ENCODE measurements at regions of chr11 and their contacts with region 1.

Region 1: GRCh38 chr11:133064152-133064877 is 468.0 kb downstream of the OPCML start:
- DNase-seq: peak; percentile 48 to 89 (median 79)
- ATAC-seq: peak; percentile 93 to 96 (median 94)
- H3K4me3 ChIP-seq: peak overlapping the region; percentile 21 to 47 (median 35)
- H3K27ac ChIP-seq: peak overlapping the region in 1 of 4 donors; percentile 6
- H3K4me1 ChIP-seq: no peaks in the 10 kb centered on the region
- H3K27me3 ChIP-seq: peaks cover 0 to under 1% (median 0%) of the 10 kb centered on the region in 4 donors
- CTCF ChIP-seq: peak; percentile 26 to 56 (median 51)

Region 2: GRCh38 chr11:132114185-132114584 is 950.1 kb before region 1 on chr11:
- intact Hi-C with region 1: loop called in 1 of 3 experiments (anchors 10 kb)
- DNase-seq: peak in 2 of 6 donors; percentile 6 to 20
- ATAC-seq: peak in 3 of 4 donors; percentile 68 to 78 (median 71)
- H3K4me3 ChIP-seq: no peak overlapping the region
- H3K27ac ChIP-seq: no peak overlapping the region
- H3K4me1 ChIP-seq: no peaks in the 10 kb centered on the region
- H3K27me3 ChIP-seq: peaks cover 0 to 5% (median 0%) of the 10 kb centered on the region in 4 donors
- CTCF ChIP-seq: peak in 2 of 4 donors; percentile 23 to 32

Measured in pancreas (tissue), 10 donors.